CD8-positive, alpha-beta T cell (primary cell): ENCODE measurements at regions of chr18 and their contacts with region 1.

Region 1: GRCh38 chr18:26335571-26336487 is 109.6 kb downstream of the TAF4B start:
- DNase-seq: no peak
- ATAC-seq: no peak
- H3K4me3 ChIP-seq: no peak overlapping the region
- H3K4me3 Mint-ChIP-seq: no peak overlapping the region
- H3K27ac ChIP-seq: no peak overlapping the region
- H3K27ac Mint-ChIP-seq: no peak overlapping the region
- H3K4me1 ChIP-seq: no peaks in the 10 kb centered on the region
- H3K4me1 Mint-ChIP-seq: peaks cover 5% of the 10 kb centered on the region
- H3K27me3 ChIP-seq: no peaks in the 10 kb centered on the region
- H3K27me3 Mint-ChIP-seq: no peaks in the 10 kb centered on the region
- CTCF ChIP-seq: no peak

Region 2: GRCh38 chr18:26034850-26035497 is 300.9 kb before region 1 on chr18:
- CTCF ChIA-PET with region 1: no interaction called
- POLR2A ChIA-PET with region 1: no interaction called
- intact Hi-C with region 1: loop called in 1 of 2 experiments (anchors 10 kb)
- DNase-seq: no peak
- ATAC-seq: no peak
- H3K4me3 ChIP-seq: no peak overlapping the region
- H3K4me3 Mint-ChIP-seq: no peak overlapping the region
- H3K27ac ChIP-seq: no peak overlapping the region
- H3K27ac Mint-ChIP-seq: no peak overlapping the region
- H3K4me1 ChIP-seq: no peaks in the 10 kb centered on the region
- H3K4me1 Mint-ChIP-seq: peaks cover 4% of the 10 kb centered on the region
- H3K27me3 ChIP-seq: no peaks in the 10 kb centered on the region
- H3K27me3 Mint-ChIP-seq: no peaks in the 10 kb centered on the region
- CTCF ChIP-seq: no peak

Region 3: DNA sequence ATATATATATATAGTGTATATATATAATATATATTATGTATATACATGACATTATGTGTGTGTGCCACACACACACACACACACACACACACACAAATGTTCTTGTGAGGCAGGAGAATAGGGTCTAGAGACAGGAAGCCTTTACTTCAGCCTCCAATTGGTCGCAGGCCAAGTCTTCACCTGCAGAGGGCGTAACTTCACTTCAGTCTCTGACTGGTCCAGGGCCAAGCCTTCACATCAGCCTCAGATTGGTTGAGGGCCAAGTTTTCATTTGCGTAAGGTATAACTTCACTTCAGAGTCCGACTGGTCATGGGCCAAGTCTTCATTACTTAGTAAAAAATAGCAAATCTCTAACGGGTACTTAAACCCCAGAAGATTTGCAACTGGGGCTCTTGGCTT is 232.2 kb before region 1 on chr18:
- CTCF ChIA-PET with region 1: no interaction called
- POLR2A ChIA-PET with region 1: no interaction called
- intact Hi-C with region 1: loop called (anchors 1 to 5 kb)
- DNase-seq: peak in 6 of 9 experiments; percentile 8 to 64 (median 40)
- ATAC-seq: peak; percentile 40
- H3K4me3 ChIP-seq: no peak overlapping the region
- H3K4me3 Mint-ChIP-seq: no peak overlapping the region
- H3K27ac ChIP-seq: no peak overlapping the region
- H3K27ac Mint-ChIP-seq: no peak overlapping the region
- H3K4me1 ChIP-seq: no peaks in the 10 kb centered on the region
- H3K4me1 Mint-ChIP-seq: no peaks in the 10 kb centered on the region
- H3K27me3 ChIP-seq: no peaks in the 10 kb centered on the region
- H3K27me3 Mint-ChIP-seq: no peaks in the 10 kb centered on the region
- CTCF ChIP-seq: peak; percentile 19

Region 4: DNA sequence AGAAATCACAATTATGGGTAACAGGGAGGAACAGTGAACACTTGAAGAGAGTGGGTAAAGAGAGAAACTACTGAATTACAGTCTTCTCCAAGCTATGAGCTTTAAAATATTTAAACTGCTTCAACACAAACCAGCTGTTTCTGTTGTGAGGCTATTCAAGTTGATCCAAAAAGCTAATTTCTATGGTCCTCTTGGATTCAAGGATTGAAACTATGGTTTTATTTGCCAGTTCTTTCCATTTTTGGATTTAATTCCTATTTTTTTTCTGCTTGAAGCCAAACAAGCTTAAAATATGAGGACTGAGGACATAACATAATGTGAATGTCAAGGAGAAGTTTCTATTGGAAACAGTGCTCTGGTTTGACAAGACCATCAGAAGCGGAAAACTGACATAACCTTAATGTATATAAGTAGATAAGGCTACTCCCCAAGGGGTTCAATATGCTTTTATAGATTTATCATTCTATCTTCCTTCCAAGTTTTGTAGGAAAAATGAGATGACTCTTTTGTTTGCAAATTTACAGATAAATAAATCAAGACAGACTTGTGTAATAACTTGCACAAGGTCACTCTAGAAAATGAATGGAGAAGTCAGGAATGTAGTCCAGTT is 590.3 kb after region 1 on chr18:
- CTCF ChIA-PET with region 1: no interaction called
- POLR2A ChIA-PET with region 1: no interaction called
- intact Hi-C with region 1: no loop called
- DNase-seq: no peak
- ATAC-seq: no peak
- H3K4me3 ChIP-seq: no peak overlapping the region
- H3K4me3 Mint-ChIP-seq: no peak overlapping the region
- H3K27ac ChIP-seq: no peak overlapping the region
- H3K27ac Mint-ChIP-seq: no peak overlapping the region
- H3K4me1 ChIP-seq: no peaks in the 10 kb centered on the region
- H3K4me1 Mint-ChIP-seq: no peaks in the 10 kb centered on the region
- H3K27me3 ChIP-seq: no peaks in the 10 kb centered on the region
- H3K27me3 Mint-ChIP-seq: no peaks in the 10 kb centered on the region
- CTCF ChIP-seq: no peak